Endothelial cell of umbilical vein (primary cell): ENCODE measurements at regions of chr3 and their contacts with region 1.

Region 1: GRCh38 chr3:167684388-167684993 is 30.7 kb upstream of the WDR49 start:
- DNase-seq: peak; percentile 74
- H3K4me3 ChIP-seq: no peak overlapping the region
- H3K27ac ChIP-seq: no peak overlapping the region
- H3K4me1 ChIP-seq: no peaks in the 10 kb centered on the region
- H3K27me3 ChIP-seq: no peaks in the 10 kb centered on the region
- CTCF ChIP-seq: peak; percentile 29 to 35
- POLR2A ChIP-seq: no peak

Region 2: DNA sequence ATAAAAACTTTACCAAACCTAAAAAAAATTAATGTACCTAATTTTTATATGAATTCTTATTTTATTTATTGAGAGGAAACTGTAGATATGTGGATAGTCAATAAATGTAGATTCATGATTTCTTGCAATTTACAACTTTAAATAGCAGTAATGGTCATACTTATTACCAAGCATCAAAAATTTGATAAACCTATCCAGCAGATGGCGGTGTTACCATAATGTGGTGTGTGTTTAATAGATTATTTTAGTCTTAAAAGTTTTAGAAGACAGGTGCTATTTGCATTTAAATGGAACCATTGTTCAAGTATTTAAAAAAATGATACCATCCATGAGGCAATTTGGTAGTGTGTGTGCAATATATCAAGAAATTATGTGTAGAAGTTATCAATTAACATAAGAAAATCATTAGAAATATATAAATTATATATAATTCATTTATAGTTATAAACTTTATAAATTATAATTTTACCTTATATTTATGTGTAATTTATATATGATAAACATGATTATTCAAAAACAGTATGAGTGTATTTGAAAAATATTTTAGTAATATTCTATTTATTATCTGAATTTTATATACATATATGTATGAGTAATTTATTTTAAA is 1671.3 kb before region 1 on chr3:
- CTCF ChIA-PET with region 1: no interaction called
- POLR2A ChIA-PET with region 1: no interaction called
- dilution Hi-C with region 1: no loop called
- intact Hi-C with region 1: loop called (anchors 10 kb)
- DNase-seq: peak; percentile 32
- H3K4me3 ChIP-seq: no peak overlapping the region
- H3K27ac ChIP-seq: no peak overlapping the region
- H3K4me1 ChIP-seq: no peaks in the 10 kb centered on the region
- H3K27me3 ChIP-seq: no peaks in the 10 kb centered on the region
- CTCF ChIP-seq: no peak
- POLR2A ChIP-seq: no peak

Region 3: DNA sequence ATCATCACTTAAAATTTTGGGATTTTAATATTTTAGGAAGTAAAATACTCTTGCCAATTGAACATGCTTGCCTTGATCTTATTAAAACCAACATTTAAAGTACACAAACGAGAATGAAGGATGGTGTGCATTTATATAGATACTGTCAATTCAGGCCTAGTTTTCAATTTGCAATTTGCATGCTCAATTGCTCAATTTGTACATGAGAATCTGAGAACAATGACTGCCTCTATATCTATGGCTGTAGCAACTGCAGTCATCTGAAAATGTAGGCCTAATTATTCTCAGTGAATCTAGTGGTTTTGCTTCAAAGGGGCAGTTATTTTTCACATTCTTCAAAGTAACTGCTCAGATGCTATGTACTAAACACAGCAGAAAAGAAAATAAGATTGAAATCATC is 323.2 kb before region 1 on chr3:
- CTCF ChIA-PET with region 1: no interaction called
- POLR2A ChIA-PET with region 1: no interaction called
- dilution Hi-C with region 1: no loop called
- intact Hi-C with region 1: no loop called
- DNase-seq: no peak
- H3K4me3 ChIP-seq: no peak overlapping the region
- H3K27ac ChIP-seq: no peak overlapping the region
- H3K4me1 ChIP-seq: no peaks in the 10 kb centered on the region
- H3K27me3 ChIP-seq: no peaks in the 10 kb centered on the region
- CTCF ChIP-seq: no peak
- POLR2A ChIP-seq: no peak

Region 4: GRCh38 chr3:167406875-167407492 is 277.5 kb before region 1 on chr3:
- CTCF ChIA-PET with region 1: no interaction called
- POLR2A ChIA-PET with region 1: no interaction called
- dilution Hi-C with region 1: no loop called
- intact Hi-C with region 1: loop called (anchors 1 kb)
- DNase-seq: peak; percentile 44
- H3K4me3 ChIP-seq: no peak overlapping the region
- H3K27ac ChIP-seq: no peak overlapping the region
- H3K4me1 ChIP-seq: no peaks in the 10 kb centered on the region
- H3K27me3 ChIP-seq: no peaks in the 10 kb centered on the region
- CTCF ChIP-seq: peak; percentile 9 to 25
- POLR2A ChIP-seq: no peak

Region 5: GRCh38 chr3:167669699-167670098 is 14.8 kb before region 1 on chr3:
- CTCF ChIA-PET with region 1: interaction called, 21 read pairs
- POLR2A ChIA-PET with region 1: no interaction called
- dilution Hi-C with region 1: no loop called
- intact Hi-C with region 1: no loop called
- DNase-seq: no peak
- H3K4me3 ChIP-seq: no peak overlapping the region
- H3K27ac ChIP-seq: no peak overlapping the region
- H3K4me1 ChIP-seq: peaks cover 17% of the 10 kb centered on the region
- H3K27me3 ChIP-seq: no peaks in the 10 kb centered on the region
- CTCF ChIP-seq: no peak
- POLR2A ChIP-seq: no peak

Region 6: GRCh38 chr3:167705840-167706239 is 21.3 kb after region 1 on chr3:
- CTCF ChIA-PET with region 1: interaction called, 20 read pairs
- POLR2A ChIA-PET with region 1: no interaction called
- dilution Hi-C with region 1: no loop called
- intact Hi-C with region 1: no loop called
- DNase-seq: peak; percentile 34
- H3K4me3 ChIP-seq: no peak overlapping the region
- H3K27ac ChIP-seq: no peak overlapping the region
- H3K4me1 ChIP-seq: peaks cover 5% of the 10 kb centered on the region
- H3K27me3 ChIP-seq: no peaks in the 10 kb centered on the region
- CTCF ChIP-seq: no peak
- POLR2A ChIP-seq: no peak